GM10248 (cell line): ENCODE measurements at regions of chr7 and their contacts with region 1.

Region 1: DNA sequence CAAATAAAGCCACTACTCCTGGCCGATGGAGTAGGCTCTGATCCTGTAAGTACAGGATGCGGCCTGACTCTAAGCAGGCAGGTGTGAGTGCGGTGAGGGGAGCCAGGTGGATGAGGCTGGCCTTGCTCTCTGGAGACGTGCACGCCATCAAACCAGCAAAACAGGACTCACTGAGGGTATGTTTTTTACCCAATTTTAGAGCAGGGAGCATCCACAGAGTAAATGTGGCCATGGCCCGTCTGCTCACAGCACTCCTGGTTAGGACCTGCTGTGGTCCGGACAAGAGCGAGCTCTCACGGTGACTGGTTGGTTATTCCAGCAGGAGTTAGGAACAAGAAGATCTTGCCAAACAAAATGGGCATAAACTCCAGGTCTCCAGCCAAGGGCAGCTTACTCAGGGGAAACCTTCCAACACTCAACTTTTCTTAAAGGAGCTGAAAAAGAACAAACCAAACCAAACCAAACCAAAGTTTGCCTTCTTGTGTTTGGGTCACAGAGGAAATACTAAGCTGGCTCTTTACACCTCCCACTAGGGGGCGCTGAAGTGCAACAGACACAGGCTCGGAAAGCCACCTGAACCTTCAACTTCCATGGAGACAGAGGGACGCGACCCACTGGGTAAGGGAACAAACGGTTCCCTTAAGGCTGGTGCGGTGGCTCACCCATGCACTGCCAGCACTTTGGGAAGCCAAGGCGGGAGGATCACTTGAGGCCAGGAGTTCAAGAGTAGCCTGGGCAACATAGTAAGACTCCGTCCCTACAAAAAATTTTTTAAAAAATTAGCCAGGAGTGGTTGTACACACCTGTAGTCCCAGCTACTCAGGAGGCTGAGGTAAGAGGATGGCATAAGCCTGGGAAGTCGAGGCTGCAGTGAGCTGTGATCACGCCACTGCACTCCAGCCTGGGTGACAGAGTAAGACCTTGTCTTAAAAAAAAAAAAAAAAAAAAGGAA is 122.4 kb downstream of the CLEC2L start:
- DNase-seq: peak; percentile 67
- CTCF ChIP-seq: peak; percentile 94

Region 2: DNA sequence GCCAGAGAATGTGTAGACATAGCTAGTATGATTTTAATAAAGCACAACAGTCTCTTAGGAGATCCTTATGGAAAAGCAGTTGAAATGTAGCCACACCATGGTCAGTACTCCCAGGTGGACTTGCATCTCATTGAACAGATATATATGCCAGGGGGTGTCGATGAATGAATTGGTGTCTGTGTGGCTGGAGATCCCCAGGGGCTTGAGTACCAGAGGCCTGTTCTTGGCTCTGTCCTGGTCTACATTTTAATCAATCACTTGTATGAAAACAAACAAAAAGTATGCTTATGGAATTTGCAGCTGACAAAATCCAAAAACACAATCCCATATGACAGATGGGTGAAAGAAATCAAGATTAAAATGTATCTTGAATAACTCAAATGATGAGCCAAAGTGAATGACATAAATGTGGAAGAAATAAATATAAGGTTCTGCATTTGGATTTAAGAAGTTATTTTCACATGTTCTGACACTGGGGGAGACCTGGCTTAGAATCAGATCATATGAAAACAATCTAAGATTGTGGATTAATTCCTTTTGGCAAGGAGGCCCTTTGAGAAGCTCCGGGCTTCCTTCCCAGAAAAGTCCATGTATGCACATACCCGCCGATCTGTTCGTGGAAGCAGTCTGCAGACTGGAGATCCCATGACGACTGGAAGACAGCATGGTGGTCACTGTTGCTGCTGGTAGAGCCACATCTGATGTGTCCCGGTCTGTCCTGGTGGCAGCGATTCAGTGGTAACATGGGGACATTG is 106.8 kb before region 1 on chr7:
- CTCF ChIA-PET with region 1: no interaction called
- POLR2A ChIA-PET with region 1: no interaction called
- DNase-seq: no peak
- CTCF ChIP-seq: no peak

Region 3: DNA sequence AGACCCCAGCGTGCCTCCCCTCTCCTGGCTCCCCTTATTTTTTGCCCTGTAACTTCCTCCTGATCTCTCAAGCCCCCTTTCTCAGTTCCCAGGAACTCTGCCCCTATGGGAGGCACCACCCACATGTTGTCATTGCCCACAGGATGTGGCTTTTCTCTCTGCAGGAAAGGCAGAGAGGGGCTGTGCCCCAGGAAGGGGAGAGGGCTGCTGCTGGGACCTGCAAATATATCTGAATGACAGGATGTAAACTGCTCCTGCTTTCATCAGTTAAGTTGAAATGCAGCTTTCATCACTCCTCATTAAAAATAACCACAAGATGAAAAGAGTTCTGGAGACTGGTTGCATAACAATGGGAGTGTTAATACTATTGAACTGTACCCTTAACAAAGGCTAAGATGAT is 19.0 kb before region 1 on chr7:
- CTCF ChIA-PET with region 1: interaction called, 49 read pairs
- POLR2A ChIA-PET with region 1: no interaction called
- DNase-seq: no peak
- CTCF ChIP-seq: no peak

Region 4: GRCh38 chr7:139667377-139667776 is 21.5 kb after region 1 on chr7:
- CTCF ChIA-PET with region 1: interaction called, 42 read pairs
- POLR2A ChIA-PET with region 1: interaction called, 4 read pairs
- DNase-seq: no peak
- CTCF ChIP-seq: no peak

Region 5: DNA sequence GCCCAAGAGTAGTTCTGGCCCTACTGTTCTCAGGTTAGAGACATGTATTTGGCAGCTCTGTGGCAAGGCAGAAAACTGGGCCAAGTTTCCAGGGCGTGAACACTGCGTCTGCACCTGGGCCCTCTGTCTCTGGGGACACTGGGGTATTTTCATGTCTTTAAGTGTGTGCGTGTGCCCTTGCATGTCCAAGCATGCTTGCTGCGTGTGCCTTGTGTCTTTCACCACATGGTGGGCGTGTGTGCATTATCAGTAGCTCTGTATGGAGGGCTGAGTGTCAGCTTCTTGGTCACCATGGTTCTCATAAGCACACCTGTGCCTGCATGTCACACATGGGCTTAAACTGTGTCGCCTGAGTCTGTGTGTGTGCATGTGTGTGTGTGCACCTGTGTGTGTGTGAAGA is 62.7 kb after region 1 on chr7:
- CTCF ChIA-PET with region 1: interaction called, 20 read pairs
- POLR2A ChIA-PET with region 1: interaction called, 3 read pairs
- DNase-seq: peak; percentile 64
- CTCF ChIP-seq: peak; percentile 6

Region 6: DNA sequence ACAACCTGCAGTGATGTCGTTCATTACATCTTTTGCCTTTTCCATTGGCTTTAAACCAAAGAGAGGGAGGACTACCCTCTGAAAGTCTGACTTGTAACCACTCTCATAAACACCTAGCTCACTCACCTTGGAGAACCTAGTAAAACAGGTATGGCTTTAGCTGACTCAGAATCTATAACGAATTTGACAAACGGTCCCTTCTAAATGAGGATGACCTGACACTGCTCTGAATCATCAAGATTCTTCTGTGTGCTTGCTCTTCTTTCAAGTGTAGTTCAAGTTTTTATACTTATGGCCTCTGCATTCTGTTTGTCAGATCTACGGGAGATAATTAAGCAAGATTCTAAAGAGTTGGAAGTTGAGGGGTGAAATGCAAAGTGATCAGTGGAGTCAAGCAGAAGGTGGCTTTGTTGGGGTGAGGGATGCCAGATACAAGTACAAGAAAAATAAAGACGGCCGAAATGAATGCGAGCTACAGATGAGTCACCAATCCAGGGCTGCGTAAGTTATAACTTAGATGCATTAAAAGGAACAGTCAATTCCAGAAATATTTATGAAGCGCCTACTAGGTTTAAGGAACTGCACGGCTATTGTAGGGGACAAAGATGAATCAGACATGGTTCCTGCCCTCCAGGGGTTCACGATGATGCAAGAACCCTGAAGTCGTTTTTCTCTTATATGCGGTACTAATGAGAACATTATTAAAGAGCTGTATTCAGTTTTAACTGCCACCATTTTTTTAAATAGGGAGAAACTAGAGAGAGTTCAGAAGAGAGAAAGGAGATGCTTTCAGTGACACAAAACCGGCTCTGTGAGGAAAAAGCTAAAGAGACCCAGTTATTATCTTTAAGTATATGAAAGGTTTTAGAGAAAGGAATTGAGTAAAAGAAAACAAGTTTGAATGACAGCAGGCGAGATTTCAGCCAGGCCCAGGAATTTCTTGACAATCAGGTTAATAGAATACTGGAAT is 125.4 kb after region 1 on chr7:
- CTCF ChIA-PET with region 1: interaction called, 19 read pairs
- POLR2A ChIA-PET with region 1: no interaction called
- DNase-seq: no peak
- CTCF ChIP-seq: no peak

Region 7: GRCh38 chr7:139987691-139988516 is 342.1 kb after region 1 on chr7:
- CTCF ChIA-PET with region 1: interaction called, 17 read pairs
- POLR2A ChIA-PET with region 1: no interaction called
- DNase-seq: no peak
- CTCF ChIP-seq: no peak

Region 8: GRCh38 chr7:140159487-140159886 is 513.6 kb after region 1 on chr7:
- CTCF ChIA-PET with region 1: no interaction called
- POLR2A ChIA-PET with region 1: no interaction called
- DNase-seq: no peak
- CTCF ChIP-seq: no peak